ENCODE measurements at regions of chr17 and their contacts with region 1.

Region 1: DNA sequence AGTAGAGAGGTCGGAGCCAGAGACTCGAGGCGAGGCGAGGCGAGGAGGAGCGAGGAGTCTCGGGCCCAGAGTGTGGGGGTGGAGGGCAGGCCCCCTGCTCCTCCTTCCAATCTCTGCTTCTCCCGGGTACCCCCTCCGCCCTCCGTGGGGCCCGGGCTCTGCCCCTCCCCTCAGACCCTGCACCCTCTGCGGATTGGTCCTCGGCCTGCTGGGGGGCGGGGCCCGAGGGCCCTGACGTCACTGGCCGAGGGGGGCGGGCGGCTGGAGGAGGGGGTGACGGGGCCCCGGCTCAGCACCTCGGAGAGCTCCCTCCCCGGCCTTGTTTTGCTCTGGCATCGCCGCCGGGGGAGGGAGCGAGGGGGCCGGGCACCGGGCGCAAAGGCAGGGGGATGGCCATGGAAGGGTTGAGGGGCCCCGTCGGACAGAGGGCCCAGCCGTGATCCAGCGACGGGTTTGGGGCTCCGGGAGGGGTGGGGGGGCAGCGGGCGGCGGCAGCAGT is at the start of gene RUNDC3A:
- DNase-seq: peak; percentile 100
- H3K4me3 ChIP-seq: peak within 1 kb of the TSS; percentile 52 to 60
- H3K27ac ChIP-seq: peak within 1 kb of the TSS; percentile 22 to 92; a peak in 3 of 4 replicates
- H3K4me1 ChIP-seq: peaks cover 0 to 31% of the 10 kb centered on the region in 2 experiments; a peak in 1 of 4 replicates
- H3K27me3 ChIP-seq: no peaks in the 10 kb centered on the region
- CTCF ChIP-seq: no peak
- EP300 ChIP-seq: no peak
- RAD21 ChIP-seq: no peak
- polyA plus RNA-seq, gene RUNDC3A: 8.9 and 11.0 TPM in 2 replicates

Region 2: GRCh38 chr17:44024271-44024663 is 284.1 kb before region 1 on chr17:
- CTCF ChIA-PET with region 1: no interaction called
- POLR2A ChIA-PET with region 1: no interaction called
- DNase-seq: peak; percentile 68
- H3K4me3 ChIP-seq: no peak overlapping the region
- H3K27ac ChIP-seq: peak overlapping the region in 1 of 2 experiments; percentile 92; a peak in 2 of 4 replicates
- H3K4me1 ChIP-seq: peaks cover 0 to 32% of the 10 kb centered on the region in 2 experiments; a peak in 2 of 4 replicates
- H3K27me3 ChIP-seq: no peaks in the 10 kb centered on the region
- CTCF ChIP-seq: no peak
- EP300 ChIP-seq: peak in 1 of 2 experiments; percentile 74; a peak in 2 of 4 replicates
- RAD21 ChIP-seq: no peak

Region 3: DNA sequence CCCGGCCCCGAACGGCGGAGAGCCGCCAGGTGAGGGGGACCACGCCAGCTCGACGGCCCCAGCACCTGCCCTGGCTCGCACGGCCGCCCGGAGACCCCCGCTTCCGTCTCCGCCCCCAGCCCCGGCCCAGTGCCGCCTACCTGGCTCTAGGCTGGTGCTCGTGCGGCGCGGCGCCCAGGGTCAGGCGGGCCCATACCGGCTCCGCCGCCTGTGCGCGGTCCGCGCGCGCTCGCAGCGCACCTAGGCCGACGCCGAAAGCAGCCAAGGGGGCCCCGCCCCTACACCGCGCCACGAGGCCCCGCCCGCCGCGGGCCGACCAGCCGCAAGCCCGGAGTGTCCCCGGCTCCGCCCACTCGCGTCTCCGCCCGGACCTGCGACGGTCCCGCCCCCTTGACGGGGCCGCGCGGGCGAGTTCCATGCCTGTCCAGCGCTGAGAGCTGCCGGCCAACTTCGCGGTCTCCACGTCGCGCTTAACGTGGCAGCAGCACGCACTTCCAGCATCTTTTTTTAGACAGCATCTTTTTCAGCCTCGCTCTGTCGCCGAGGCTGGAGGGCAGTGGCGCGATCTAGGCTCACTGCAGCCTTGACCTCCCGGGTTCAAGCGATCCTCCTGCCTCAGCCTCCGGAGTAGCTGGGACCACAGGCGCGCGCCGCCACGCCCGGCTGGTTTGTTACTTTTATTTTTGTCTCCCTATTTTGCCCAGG is 16.4 kb after region 1 on chr17 and contains the start of gene SLC25A39:
- CTCF ChIA-PET with region 1: interaction called, 4 read pairs
- POLR2A ChIA-PET with region 1: interaction called, 34 read pairs
- DNase-seq: peak; percentile 98
- H3K4me3 ChIP-seq: peak within 1 kb of the TSS; percentile 95 to 98
- H3K27ac ChIP-seq: peak within 1 kb of the TSS; percentile 48 to 60; a peak in 2 of 4 replicates
- H3K4me1 ChIP-seq: peaks cover 0 to 10% of the 10 kb centered on the region in 2 experiments; a peak in 1 of 4 replicates
- H3K27me3 ChIP-seq: no peaks in the 10 kb centered on the region
- CTCF ChIP-seq: no peak
- EP300 ChIP-seq: no peak
- RAD21 ChIP-seq: peak; percentile 11; the same call in 1 of the 2 replicates
- polyA plus RNA-seq, gene SLC25A39: 106 and 131 TPM in 2 replicates